B cell (primary cell): ENCODE measurements at regions of chr2 and their contacts with region 1.

Region 1: GRCh38 chr2:59584958-59585357 is 968.5 kb downstream of the BCL11A start:
- DNase-seq: no peak
- ATAC-seq: no peak
- H3K4me3 ChIP-seq: no peak overlapping the region
- H3K4me3 Mint-ChIP-seq: no peak overlapping the region
- H3K27ac ChIP-seq: no peak overlapping the region
- H3K27ac Mint-ChIP-seq: no peak overlapping the region
- H3K4me1 ChIP-seq: peaks cover 4 to 5% of the 10 kb centered on the region in 2 donors
- H3K4me1 Mint-ChIP-seq: peaks cover 7% of the 10 kb centered on the region
- H3K27me3 ChIP-seq: no peaks in the 10 kb centered on the region
- H3K27me3 Mint-ChIP-seq: no peaks in the 10 kb centered on the region
- CTCF ChIP-seq: peak; percentile 21

Region 2: DNA sequence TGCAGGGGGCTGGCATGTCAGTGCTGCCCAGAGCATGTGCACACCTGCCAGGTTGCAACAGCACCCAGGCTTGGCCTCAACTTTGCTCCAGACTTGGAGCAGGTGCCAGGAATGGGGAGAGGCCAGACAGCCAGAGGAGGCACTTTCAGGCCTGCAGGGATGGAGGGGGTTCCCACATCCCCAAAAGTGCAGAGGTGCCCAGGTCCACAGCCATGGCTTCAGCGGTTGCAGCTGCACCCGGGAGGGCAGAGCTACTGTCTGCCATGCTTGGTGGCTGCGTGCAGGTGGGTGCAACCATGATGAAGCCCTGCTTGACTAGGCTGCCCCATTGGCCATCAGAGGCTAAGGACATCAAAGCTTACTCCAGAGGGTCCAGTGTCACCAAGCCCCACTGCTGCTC is 1735.1 kb before region 1 on chr2:
- CTCF ChIA-PET with region 1: no interaction called
- POLR2A ChIA-PET with region 1: no interaction called
- intact Hi-C with region 1: loop called (anchors 5 kb)
- DNase-seq: no peak
- ATAC-seq: no peak
- H3K4me3 ChIP-seq: no peak overlapping the region
- H3K4me3 Mint-ChIP-seq: no peak overlapping the region
- H3K27ac ChIP-seq: no peak overlapping the region
- H3K27ac Mint-ChIP-seq: no peak overlapping the region
- H3K4me1 ChIP-seq: no peaks in the 10 kb centered on the region
- H3K4me1 Mint-ChIP-seq: no peaks in the 10 kb centered on the region
- H3K27me3 ChIP-seq: no peaks in the 10 kb centered on the region
- H3K27me3 Mint-ChIP-seq: no peaks in the 10 kb centered on the region
- CTCF ChIP-seq: no peak

Region 3: GRCh38 chr2:59276033-59276432 is 308.9 kb before region 1 on chr2:
- CTCF ChIA-PET with region 1: no interaction called
- POLR2A ChIA-PET with region 1: no interaction called
- intact Hi-C with region 1: no loop called
- DNase-seq: no peak
- ATAC-seq: no peak
- H3K4me3 ChIP-seq: no peak overlapping the region
- H3K4me3 Mint-ChIP-seq: no peak overlapping the region
- H3K27ac ChIP-seq: no peak overlapping the region
- H3K27ac Mint-ChIP-seq: no peak overlapping the region
- H3K4me1 ChIP-seq: no peaks in the 10 kb centered on the region
- H3K4me1 Mint-ChIP-seq: no peaks in the 10 kb centered on the region
- H3K27me3 ChIP-seq: no peaks in the 10 kb centered on the region
- H3K27me3 Mint-ChIP-seq: peaks cover 7% of the 10 kb centered on the region
- CTCF ChIP-seq: peak; percentile 9